ENCODE measurements at regions of chr15 and their contacts with region 1.

Region 1: DNA sequence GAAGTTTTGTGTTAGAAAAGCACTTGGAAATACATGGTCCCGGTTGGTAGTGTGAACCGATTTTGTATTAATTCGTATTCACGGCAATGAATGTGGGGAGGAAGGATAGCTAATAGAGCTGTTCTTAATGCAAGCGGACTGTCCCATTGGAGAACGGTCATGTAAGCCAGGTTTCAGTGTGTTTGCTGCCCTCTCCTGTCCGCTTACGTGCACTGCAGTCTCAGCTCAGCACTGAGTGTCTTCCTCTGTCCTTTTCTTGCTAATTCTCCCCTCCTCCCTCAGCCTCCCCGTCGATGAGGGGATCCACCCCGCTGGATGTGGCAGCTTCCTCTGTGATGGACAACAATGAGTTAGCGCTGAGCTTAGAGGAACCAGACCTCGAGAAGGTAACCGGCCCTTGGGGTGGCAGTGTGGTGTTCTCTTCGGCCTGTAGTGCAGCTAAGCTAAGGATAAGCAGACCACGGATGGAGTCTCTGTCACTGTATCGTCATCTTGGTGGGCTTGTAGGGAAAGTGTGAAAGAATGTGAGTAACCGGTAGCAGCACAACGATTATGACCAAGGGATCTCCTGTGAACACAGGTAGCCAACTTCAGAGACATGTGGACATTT is 267.5 kb upstream of the CHRM5 start:
- DNase-seq: peak; percentile 62
- H3K4me3 ChIP-seq: no peak overlapping the region
- H3K27ac ChIP-seq: no peak overlapping the region
- H3K4me1 ChIP-seq: no peaks in the 10 kb centered on the region
- H3K27me3 ChIP-seq: no peaks in the 10 kb centered on the region
- CTCF ChIP-seq: peak; percentile 86

Region 2: GRCh38 chr15:33234014-33234461 is 466.8 kb before region 1 on chr15:
- intact Hi-C with region 1: loop called (anchors 10 kb)
- DNase-seq: no peak
- H3K4me3 ChIP-seq: no peak overlapping the region
- H3K27ac ChIP-seq: no peak overlapping the region
- H3K4me1 ChIP-seq: no peaks in the 10 kb centered on the region
- H3K27me3 ChIP-seq: no peaks in the 10 kb centered on the region
- CTCF ChIP-seq: peak; percentile 12

Region 3: GRCh38 chr15:33292717-33293307 is 408.0 kb before region 1 on chr15:
- intact Hi-C with region 1: loop called (anchors 5 kb)
- DNase-seq: peak; percentile 44
- H3K4me3 ChIP-seq: no peak overlapping the region
- H3K27ac ChIP-seq: no peak overlapping the region
- H3K4me1 ChIP-seq: no peaks in the 10 kb centered on the region
- H3K27me3 ChIP-seq: no peaks in the 10 kb centered on the region
- CTCF ChIP-seq: peak; percentile 50

Region 4: DNA sequence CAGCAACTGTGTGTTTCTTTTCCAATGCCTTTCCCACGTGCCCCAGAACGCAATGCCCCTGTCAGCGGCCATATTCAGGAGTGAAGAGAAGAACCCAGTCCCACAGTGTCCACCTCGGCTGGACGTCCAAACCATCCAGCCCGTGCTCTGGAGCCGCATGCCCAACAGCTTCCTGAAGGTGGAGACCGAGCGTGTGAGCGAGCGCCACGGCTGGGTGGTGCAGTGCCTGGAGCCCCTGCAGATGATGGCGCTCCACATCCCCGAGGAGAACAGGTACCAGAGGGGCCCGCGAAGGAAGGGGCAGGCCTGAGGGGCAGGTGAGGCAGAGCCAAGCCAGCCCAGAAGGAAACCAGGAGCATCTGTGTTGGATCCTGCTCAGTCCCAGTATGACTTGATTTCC is 40.6 kb before region 1 on chr15:
- intact Hi-C with region 1: no loop called
- DNase-seq: no peak
- H3K4me3 ChIP-seq: no peak overlapping the region
- H3K27ac ChIP-seq: no peak overlapping the region
- H3K4me1 ChIP-seq: no peaks in the 10 kb centered on the region
- H3K27me3 ChIP-seq: no peaks in the 10 kb centered on the region
- CTCF ChIP-seq: no peak

Region 5: DNA sequence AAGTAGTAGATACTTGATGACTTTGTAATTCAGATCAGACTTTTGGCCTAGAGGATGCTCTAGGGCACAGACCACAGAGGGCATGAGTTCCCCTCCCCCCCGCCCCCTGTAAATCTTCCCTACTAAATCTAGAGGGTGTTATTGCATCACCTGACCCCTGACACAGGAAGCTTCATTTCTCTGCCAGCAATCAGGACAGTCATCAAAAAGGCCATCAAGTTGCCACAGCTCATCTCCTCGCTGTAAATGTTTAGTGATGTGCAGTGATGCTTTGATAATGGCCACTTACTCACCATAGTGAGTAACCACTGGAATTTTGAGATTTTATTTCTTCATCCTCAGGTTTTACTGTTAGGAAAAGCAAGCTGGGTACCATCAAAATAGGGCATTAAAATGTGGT is 21.7 kb before region 1 on chr15:
- intact Hi-C with region 1: no loop called
- DNase-seq: no peak
- H3K4me3 ChIP-seq: no peak overlapping the region
- H3K27ac ChIP-seq: no peak overlapping the region
- H3K4me1 ChIP-seq: no peaks in the 10 kb centered on the region
- H3K27me3 ChIP-seq: no peaks in the 10 kb centered on the region
- CTCF ChIP-seq: no peak

Measured in colonic mucosa (tissue), 4 donors.